ENCODE measurements at regions of chr17 and their contacts with region 1.

Region 1: GRCh38 chr17:80263253-80264204 is 2.9 kb downstream of the RNF213 start:
- DNase-seq: peak; percentile 56 to 92 (median 79)
- ATAC-seq: peak; percentile 34 to 38
- H3K4me3 Mint-ChIP-seq: peak overlapping the region; percentile 85 to 99 (median 98)
- H3K27ac Mint-ChIP-seq: peak overlapping the region in 9 of 10 donors; percentile 86 to 97 (median 97)
- H3K4me1 Mint-ChIP-seq: peaks cover 19 to 62% (median 56%) of the 10 kb centered on the region in 4 donors
- H3K27me3 Mint-ChIP-seq: peaks cover 0 to 2% (median 0%) of the 10 kb centered on the region in 5 donors

Region 2: GRCh38 chr17:80203471-80203963 is 60.0 kb before region 1 on chr17:
- POLR2A ChIA-PET with region 1: no interaction called
- DNase-seq: no peak
- ATAC-seq: no peak
- H3K4me3 Mint-ChIP-seq: no peak overlapping the region
- H3K27ac Mint-ChIP-seq: no peak overlapping the region
- H3K4me1 Mint-ChIP-seq: peaks cover 0 to 4% (median 0%) of the 10 kb centered on the region in 4 donors
- H3K27me3 Mint-ChIP-seq: no peaks in the 10 kb centered on the region

Region 3: GRCh38 chr17:80219013-80219762 is 44.3 kb before region 1 on chr17:
- POLR2A ChIA-PET with region 1: interaction called, 21 read pairs
- DNase-seq: peak; percentile 75 to 96 (median 92)
- ATAC-seq: peak; percentile 86 to 90
- H3K4me3 Mint-ChIP-seq: peak overlapping the region; percentile 91 to 97 (median 94)
- H3K27ac Mint-ChIP-seq: peak overlapping the region; percentile 94 to 98 (median 97)
- H3K4me1 Mint-ChIP-seq: peaks cover 25 to 61% (median 48%) of the 10 kb centered on the region in 4 donors
- H3K27me3 Mint-ChIP-seq: no peaks in the 10 kb centered on the region

Region 4: GRCh38 chr17:80279895-80280294 is 16.4 kb after region 1 on chr17:
- POLR2A ChIA-PET with region 1: interaction called, 34 read pairs
- DNase-seq: peak in 1 of 10 donors; percentile 16
- ATAC-seq: no peak
- H3K4me3 Mint-ChIP-seq: peak overlapping the region in 1 of 10 donors; percentile 51
- H3K27ac Mint-ChIP-seq: peak overlapping the region in 9 of 10 donors; percentile 26 to 87 (median 76)
- H3K4me1 Mint-ChIP-seq: peaks cover 25 to 50% (median 42%) of the 10 kb centered on the region in 4 donors
- H3K27me3 Mint-ChIP-seq: no peaks in the 10 kb centered on the region

Measured in naive thymus-derived CD8-positive, alpha-beta T cell (primary cell).